ENCODE measurements at regions of chr20 and their contacts with region 1.

Region 1: GRCh38 chr20:49245921-49246740 is 26.9 kb downstream of the DDX27 start:
- DNase-seq: peak; percentile 73
- H3K27ac ChIP-seq: peak overlapping the region; percentile 15
- CTCF ChIP-seq: peak; percentile 83

Region 2: GRCh38 chr20:49140834-49141233 is 105.3 kb before region 1 on chr20:
- CTCF ChIA-PET with region 1: interaction called, 10 read pairs
- POLR2A ChIA-PET with region 1: no interaction called
- DNase-seq: no peak
- H3K27ac ChIP-seq: no peak overlapping the region
- CTCF ChIP-seq: no peak

Region 3: DNA sequence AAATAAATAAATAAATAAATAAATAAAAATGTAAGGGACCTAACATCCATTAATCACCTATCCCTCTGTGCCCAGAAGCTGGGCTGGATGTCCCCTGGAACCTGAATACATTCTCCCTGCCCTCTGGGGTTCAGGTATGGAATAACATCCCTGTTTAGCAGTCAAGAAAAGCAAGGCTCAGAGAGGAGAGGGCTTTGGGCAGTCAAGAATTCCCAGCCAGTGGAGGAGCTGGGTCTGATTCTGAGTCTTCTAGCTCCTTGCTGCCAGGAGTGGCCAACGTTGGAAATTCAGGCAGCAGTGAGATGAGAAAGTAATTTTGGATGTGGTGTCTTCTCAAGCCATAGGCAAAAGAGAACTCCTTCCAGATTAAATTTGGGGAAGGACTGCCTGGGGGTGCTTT is 74.3 kb after region 1 on chr20:
- CTCF ChIA-PET with region 1: interaction called, 14 read pairs
- POLR2A ChIA-PET with region 1: no interaction called
- DNase-seq: peak; percentile 65
- H3K27ac ChIP-seq: no peak overlapping the region
- CTCF ChIP-seq: 0 out of 2 replicates have a peak, but pooled peaks have one; percentile 31